Head of caudate nucleus (tissue), 42 donors: ENCODE measurements at regions of chr9 and their contacts with region 1.

Region 1: DNA sequence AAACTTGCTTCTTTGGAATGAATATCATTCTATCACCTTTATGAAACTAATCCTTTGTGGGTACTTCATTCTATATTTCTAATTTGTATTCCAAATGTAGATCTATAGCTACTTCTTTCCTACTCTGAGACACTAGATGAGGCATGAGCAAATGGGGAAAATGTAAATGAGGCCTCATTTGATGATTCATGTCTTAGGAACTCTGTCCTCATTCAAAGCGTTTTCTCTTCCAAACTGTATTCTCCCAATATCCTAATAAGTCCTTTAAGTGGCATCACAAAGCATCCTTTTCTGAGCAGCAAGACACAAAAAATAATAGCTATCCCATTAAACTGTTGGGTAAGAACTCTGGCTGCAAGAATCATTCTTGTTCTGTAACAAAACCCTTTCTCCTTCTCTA is 56.1 kb downstream of the TTLL11 start:
- DNase-seq: no peak

Region 2: GRCh38 chr9:122087406-122088200 is 50.6 kb after region 1 on chr9:
- intact Hi-C with region 1: loop called (anchors 5 kb)
- DNase-seq: peak in 7 of 42 donors; percentile 16 to 56 (median 41)